MCF 10A (cell line): ENCODE measurements at regions of chr5 and their contacts with region 1.

Region 1: GRCh38 chr5:79702606-79703382 is 13.2 kb downstream of the CMYA5 start:
- DNase-seq: peak; percentile 60
- H3K4me3 Mint-ChIP-seq: no peak overlapping the region
- H3K27ac Mint-ChIP-seq: peak overlapping the region; percentile 63
- H3K4me1 Mint-ChIP-seq: peaks cover 10% of the 10 kb centered on the region
- H3K27me3 Mint-ChIP-seq: no peaks in the 10 kb centered on the region
- CTCF ChIP-seq: peak; percentile 43

Region 2: GRCh38 chr5:79716839-79717238 is 14.0 kb after region 1 on chr5:
- CTCF ChIA-PET with region 1: interaction called, 11 read pairs
- POLR2A ChIA-PET with region 1: no interaction called
- intact Hi-C with region 1: no loop called
- DNase-seq: no peak
- H3K4me3 Mint-ChIP-seq: no peak overlapping the region
- H3K27ac Mint-ChIP-seq: no peak overlapping the region
- H3K4me1 Mint-ChIP-seq: no peaks in the 10 kb centered on the region
- H3K27me3 Mint-ChIP-seq: no peaks in the 10 kb centered on the region
- CTCF ChIP-seq: no peak